ENCODE measurements at regions of chr5 and their contacts with region 1.

Region 1: GRCh38 chr5:32044939-32045338 is 129.2 kb downstream of the GOLPH3 start:
- DNase-seq: peak; percentile 89
- H3K4me3 ChIP-seq: no peak overlapping the region
- H3K27ac ChIP-seq: no peak overlapping the region
- H3K4me1 ChIP-seq: peaks cover 11% of the 10 kb centered on the region
- H3K27me3 ChIP-seq: peaks cover 14% of the 10 kb centered on the region
- CTCF ChIP-seq: no peak

Region 2: DNA sequence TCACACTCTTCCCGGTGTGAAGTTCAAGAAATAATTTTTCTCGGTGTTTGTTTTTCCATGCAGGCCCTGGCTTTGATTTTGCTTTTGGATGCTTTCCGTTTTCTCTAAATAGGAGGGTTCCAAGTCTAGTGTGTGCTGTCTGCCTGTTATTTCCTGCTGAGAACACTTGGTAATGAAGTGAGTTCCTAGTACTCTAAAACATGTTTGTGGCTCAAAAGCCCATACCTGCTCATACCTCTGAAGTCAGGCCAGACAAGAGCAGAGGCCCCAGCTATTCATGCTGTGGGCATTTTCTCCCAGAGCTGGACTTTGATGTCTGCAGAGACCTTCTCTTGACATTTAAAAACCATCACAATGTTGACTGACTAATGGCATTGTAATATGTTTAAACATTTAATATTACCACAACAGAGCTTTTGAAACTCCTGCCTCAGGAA is 82.0 kb before region 1 on chr5:
- CTCF ChIA-PET with region 1: no interaction called
- dilution Hi-C with region 1: loop called (anchors 5 kb)
- in situ Hi-C with region 1: no loop called
- intact Hi-C with region 1: no loop called
- DNase-seq: peak; percentile 76
- H3K4me3 ChIP-seq: no peak overlapping the region
- H3K27ac ChIP-seq: no peak overlapping the region
- H3K4me1 ChIP-seq: peaks cover 11% of the 10 kb centered on the region
- H3K27me3 ChIP-seq: peaks cover 2% of the 10 kb centered on the region
- CTCF ChIP-seq: no peak

Region 3: DNA sequence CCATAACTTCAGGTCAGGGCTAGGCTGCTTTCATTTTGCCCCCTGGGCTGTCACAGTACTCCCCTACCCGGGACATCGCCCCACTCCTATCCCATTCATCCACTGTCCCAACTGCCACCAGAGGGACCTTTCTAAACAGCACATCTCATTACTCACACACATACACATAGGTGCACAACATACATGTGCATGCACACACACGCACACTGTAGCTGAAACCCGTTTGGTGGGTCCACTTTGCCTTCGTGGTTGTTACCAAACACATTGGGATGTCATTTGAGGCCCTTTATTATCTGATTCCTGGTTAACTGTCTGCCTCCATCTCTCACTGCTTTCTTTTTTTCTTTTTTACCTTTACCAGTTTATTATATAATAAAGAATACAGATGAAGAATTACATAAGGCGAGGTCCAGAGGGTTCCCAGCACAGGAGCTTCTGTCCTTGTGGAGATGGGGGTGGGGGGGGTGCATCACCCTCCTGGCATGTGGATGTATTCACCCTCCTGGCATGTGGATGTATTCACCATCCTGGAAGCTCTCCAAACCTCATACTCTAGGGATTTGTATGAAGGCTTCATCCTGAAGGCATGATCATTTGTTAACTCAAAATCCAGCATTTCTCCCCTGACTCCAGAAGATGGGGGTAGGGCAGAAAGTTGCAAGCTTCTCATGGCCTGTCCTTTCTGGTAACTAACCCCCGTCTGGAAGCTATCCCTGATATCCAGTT is 56.8 kb before region 1 on chr5:
- CTCF ChIA-PET with region 1: no interaction called
- dilution Hi-C with region 1: no loop called
- in situ Hi-C with region 1: no loop called
- intact Hi-C with region 1: loop called (anchors 10 kb)
- DNase-seq: peak; percentile 93
- H3K4me3 ChIP-seq: no peak overlapping the region
- H3K27ac ChIP-seq: no peak overlapping the region
- H3K4me1 ChIP-seq: peaks cover 34% of the 10 kb centered on the region
- H3K27me3 ChIP-seq: no peaks in the 10 kb centered on the region
- CTCF ChIP-seq: peak; percentile 10 to 14

Region 4: GRCh38 chr5:32076699-32077695 is 32.1 kb after region 1 on chr5:
- CTCF ChIA-PET with region 1: interaction called, 12 read pairs
- dilution Hi-C with region 1: no loop called
- in situ Hi-C with region 1: no loop called
- intact Hi-C with region 1: no loop called
- DNase-seq: peak; percentile 39
- H3K4me3 ChIP-seq: no peak overlapping the region
- H3K27ac ChIP-seq: no peak overlapping the region
- H3K4me1 ChIP-seq: peaks cover under 1% of the 10 kb centered on the region
- H3K27me3 ChIP-seq: no peaks in the 10 kb centered on the region
- CTCF ChIP-seq: peak; percentile 73 to 79

Region 5: GRCh38 chr5:32109236-32109635 is 64.3 kb after region 1 on chr5:
- CTCF ChIA-PET with region 1: no interaction called
- dilution Hi-C with region 1: loop called (anchors 5 kb)
- in situ Hi-C with region 1: no loop called
- intact Hi-C with region 1: no loop called
- DNase-seq: no peak
- H3K4me3 ChIP-seq: no peak overlapping the region
- H3K27ac ChIP-seq: no peak overlapping the region
- H3K4me1 ChIP-seq: no peaks in the 10 kb centered on the region
- H3K27me3 ChIP-seq: no peaks in the 10 kb centered on the region
- CTCF ChIP-seq: no peak

Region 6: GRCh38 chr5:32390819-32391591 is 346.1 kb after region 1 on chr5:
- CTCF ChIA-PET with region 1: no interaction called
- dilution Hi-C with region 1: no loop called
- in situ Hi-C with region 1: no loop called
- intact Hi-C with region 1: no loop called
- DNase-seq: peak; percentile 88
- H3K4me3 ChIP-seq: no peak overlapping the region
- H3K27ac ChIP-seq: peak overlapping the region; percentile 75
- H3K4me1 ChIP-seq: peaks cover 12% of the 10 kb centered on the region
- H3K27me3 ChIP-seq: no peaks in the 10 kb centered on the region
- CTCF ChIP-seq: no peak

Measured in mammary epithelial cell (primary cell).